ENCODE measurements at regions of chr6 and their contacts with region 1.

Region 1: DNA sequence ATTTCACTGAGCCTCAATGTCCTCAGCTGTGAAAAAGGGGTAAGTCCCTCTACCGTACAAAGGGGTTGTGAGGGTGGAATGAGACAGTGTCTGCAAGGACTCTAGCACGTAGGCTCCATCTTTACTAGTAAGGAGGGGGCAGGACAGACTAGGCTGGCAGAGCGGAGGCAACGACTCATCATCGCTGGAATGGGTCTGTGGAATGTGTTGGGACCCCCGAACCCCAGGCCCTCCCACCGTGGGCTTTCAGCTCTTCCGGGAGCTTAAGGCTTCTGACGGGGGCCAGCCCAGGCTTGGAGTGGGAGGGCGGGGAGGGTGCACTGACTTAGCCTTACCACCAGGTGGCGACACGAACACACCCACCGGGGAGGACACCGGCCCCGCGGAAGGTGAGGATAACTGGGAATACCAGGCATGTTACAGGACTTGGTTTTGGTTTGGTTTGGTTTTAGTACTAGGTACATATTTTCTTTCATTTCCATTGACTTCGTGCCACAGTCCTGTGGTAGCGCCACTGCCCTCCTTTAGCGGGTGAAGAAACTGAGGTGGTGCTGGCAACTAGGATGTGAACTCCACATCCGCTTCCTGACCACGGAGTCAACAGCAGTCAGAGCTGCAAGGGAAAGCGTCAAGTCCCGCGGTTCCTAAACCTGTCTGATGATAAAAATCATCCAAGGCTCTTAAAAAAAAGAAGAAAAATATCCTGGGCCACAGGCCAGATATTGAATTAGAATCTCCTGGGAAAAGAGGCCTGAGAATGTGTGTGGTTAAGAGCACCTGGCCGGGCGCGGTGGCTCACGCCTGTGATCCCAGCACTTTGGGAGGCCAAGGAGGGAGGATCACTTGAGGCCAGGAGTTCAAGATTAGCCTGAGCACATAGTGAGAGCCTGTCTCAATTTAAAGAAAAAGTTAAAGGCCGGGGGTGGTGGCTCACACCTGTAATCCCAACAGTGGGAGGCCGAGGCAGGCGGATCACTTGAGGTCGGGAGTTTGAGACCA is 10.3 kb upstream of the TULP1 start:
- DNase-seq: peak; percentile 58 to 85
- ATAC-seq: peak; percentile 79 to 91 (median 82)
- H3K4me3 ChIP-seq: no peak overlapping the region
- H3K4me3 Mint-ChIP-seq: peak overlapping the region; percentile 71
- H3K27ac ChIP-seq: peak overlapping the region; percentile 49
- H3K27ac Mint-ChIP-seq: peak overlapping the region; percentile 76
- H3K4me1 ChIP-seq: peaks cover 42% of the 10 kb centered on the region
- H3K4me1 Mint-ChIP-seq: peaks cover 41 to 47% of the 10 kb centered on the region in 2 donors
- H3K27me3 ChIP-seq: no peaks in the 10 kb centered on the region
- H3K27me3 Mint-ChIP-seq: peaks cover 0 to 2% of the 10 kb centered on the region in 2 donors
- CTCF ChIP-seq: peak; percentile 92

Region 2: DNA sequence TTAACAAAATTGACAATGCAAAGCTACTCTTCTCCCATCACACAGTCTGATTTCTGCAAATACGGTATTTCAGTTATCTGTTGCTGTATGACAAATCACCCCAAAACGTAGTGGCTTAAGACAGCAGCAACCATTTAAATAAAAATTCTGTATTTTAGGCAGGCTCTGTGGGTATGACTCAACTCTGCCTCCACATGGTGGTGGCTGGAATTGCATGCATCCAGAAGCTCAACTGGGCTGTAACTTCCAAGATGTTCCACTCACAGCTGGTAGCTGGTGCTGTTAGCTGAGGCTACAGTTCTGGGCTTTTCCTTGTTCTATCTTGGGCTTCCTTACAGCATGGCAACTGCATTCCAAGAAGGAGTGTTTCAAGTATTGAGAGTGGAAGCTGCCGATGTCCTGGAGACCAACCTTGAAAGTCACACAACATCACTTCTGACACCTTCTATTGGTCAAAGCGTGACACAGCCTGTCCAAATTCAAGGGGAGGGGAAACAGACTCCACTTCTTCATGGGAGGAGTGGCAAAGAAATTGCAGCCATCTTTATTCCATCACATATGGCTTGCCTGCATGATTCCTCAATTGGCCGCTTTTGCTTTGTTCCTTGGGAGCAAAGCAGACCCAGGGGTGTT is 29.4 kb after region 1 on chr6:
- intact Hi-C with region 1: loop called (anchors 2 kb)
- DNase-seq: peak; percentile 63 to 84
- ATAC-seq: peak; percentile 74 to 91 (median 81)
- H3K4me3 ChIP-seq: no peak overlapping the region
- H3K4me3 Mint-ChIP-seq: no peak overlapping the region
- H3K27ac ChIP-seq: no peak overlapping the region
- H3K27ac Mint-ChIP-seq: no peak overlapping the region
- H3K4me1 ChIP-seq: no peaks in the 10 kb centered on the region
- H3K4me1 Mint-ChIP-seq: peaks cover 0 to 6% of the 10 kb centered on the region in 2 donors
- H3K27me3 ChIP-seq: no peaks in the 10 kb centered on the region
- H3K27me3 Mint-ChIP-seq: peaks cover 0 to 3% of the 10 kb centered on the region in 2 donors
- CTCF ChIP-seq: peak; percentile 95

Region 3: DNA sequence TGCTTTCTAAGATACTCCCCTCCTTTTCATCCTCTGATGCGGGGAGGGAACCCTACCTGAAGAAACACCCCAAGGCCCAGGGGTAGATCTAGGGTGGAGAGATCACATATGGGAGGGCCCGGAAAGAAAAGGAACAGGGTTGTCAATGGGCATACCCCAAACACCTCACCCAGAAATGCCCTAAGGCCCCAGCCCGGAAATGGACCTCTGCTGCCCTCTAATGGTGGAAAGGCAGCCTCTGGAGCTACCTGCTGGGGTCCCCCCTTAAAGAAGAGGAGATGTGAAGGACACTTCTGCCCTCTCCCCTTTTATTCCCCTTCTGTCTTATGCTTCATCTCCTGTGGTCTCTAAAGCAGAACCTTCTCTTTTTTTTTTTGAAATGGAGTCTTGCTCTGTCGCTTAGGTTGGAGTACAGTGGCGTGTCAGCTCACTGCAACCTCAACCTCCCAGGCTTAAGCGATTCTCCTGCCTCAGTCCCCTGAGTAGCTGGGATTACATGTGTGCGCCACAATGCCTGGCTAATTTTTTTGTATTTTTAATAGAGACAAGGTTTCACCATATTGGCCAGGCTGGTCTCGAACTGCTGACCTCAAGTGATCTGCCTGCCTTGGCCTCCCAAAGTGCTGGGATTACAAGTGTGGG is 213.4 kb after region 1 on chr6:
- intact Hi-C with region 1: loop called (anchors 1 kb)
- DNase-seq: peak; percentile 79 to 92
- ATAC-seq: peak; percentile 39 to 60 (median 48)
- H3K4me3 ChIP-seq: no peak overlapping the region
- H3K4me3 Mint-ChIP-seq: no peak overlapping the region
- H3K27ac ChIP-seq: no peak overlapping the region
- H3K27ac Mint-ChIP-seq: no peak overlapping the region
- H3K4me1 ChIP-seq: peaks cover 37% of the 10 kb centered on the region
- H3K4me1 Mint-ChIP-seq: peaks cover 26 to 35% of the 10 kb centered on the region in 2 donors
- H3K27me3 ChIP-seq: no peaks in the 10 kb centered on the region
- H3K27me3 Mint-ChIP-seq: no peaks in the 10 kb centered on the region
- CTCF ChIP-seq: peak; percentile 87

Measured in natural killer cell (primary cell).